ENCODE measurements at regions of chr9 and their contacts with region 1.

Region 1: DNA sequence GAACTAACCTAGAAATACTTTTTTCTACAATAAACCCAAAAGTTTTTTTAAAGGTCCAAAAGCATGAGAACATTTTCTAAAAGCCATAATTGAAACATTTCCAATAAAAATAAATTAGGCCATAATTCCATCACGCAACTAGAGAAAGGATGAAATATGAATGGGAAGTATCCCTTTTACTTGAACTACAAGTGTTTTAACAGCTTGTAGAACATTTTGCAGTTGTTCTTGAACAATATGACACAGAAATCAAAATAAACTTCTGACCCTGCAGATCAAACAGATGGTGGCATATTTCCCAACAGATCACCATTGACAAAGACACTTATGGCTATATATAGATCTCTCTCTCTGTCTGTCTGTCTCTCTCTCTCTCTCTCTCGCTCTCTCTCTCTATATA is 624.4 kb downstream of the PSAT1 start:
- DNase-seq: no peak
- H3K4me3 ChIP-seq: no peak overlapping the region
- H3K27ac ChIP-seq: no peak overlapping the region
- H3K4me1 ChIP-seq: no peaks in the 10 kb centered on the region
- H3K27me3 ChIP-seq: no peaks in the 10 kb centered on the region
- CTCF ChIP-seq: no peak
- POLR2A ChIP-seq: no peak

Region 2: GRCh38 chr9:78973889-78974288 is 52.5 kb after region 1 on chr9:
- intact Hi-C with region 1: loop called (anchors 5 kb)
- DNase-seq: no peak
- H3K4me3 ChIP-seq: no peak overlapping the region
- H3K27ac ChIP-seq: no peak overlapping the region
- H3K4me1 ChIP-seq: no peaks in the 10 kb centered on the region
- H3K27me3 ChIP-seq: no peaks in the 10 kb centered on the region
- CTCF ChIP-seq: no peak
- POLR2A ChIP-seq: no peak

Region 3: GRCh38 chr9:79007701-79008483 is 86.6 kb after region 1 on chr9:
- intact Hi-C with region 1: no loop called
- DNase-seq: no peak
- H3K4me3 ChIP-seq: no peak overlapping the region
- H3K27ac ChIP-seq: no peak overlapping the region
- H3K4me1 ChIP-seq: no peaks in the 10 kb centered on the region
- H3K27me3 ChIP-seq: no peaks in the 10 kb centered on the region
- CTCF ChIP-seq: no peak
- POLR2A ChIP-seq: no peak